Left colon (tissue), 2 donors: ENCODE measurements at regions of chr9 and their contacts with region 1.

Region 1: DNA sequence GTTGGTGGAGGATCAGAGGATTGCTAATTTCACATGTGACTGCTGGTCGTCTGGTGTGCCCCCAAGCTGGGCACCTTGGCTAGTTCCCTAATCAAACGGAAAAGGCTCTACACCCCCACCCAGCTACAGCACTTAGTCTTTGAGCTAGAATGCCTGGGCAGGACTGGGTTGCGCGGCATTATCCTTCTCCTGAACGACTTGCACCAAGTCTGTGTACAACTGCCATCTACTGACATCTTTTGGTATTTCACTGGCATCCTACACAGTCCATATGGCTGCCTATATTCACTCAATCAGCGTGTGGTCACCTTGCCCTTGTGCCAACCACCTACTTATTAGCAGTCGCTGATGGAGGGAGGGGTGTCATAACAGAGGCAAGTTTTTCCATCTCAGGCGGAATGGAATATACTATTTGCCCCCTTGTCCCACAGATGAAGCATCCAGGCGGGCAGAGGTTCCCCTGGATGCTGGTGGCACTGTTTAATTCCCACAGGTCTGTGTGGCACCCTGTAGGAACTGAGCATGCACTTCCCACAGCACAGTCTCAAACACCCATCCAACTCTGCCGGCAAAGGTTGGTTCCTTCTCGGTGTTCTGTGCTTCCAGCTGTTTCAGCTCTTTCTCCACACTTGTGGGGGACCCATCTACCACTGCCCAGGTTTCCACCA is 150.1 kb downstream of the OSTF1 start:
- DNase-seq: peak; percentile 52 to 53
- ATAC-seq: peak; percentile 97

Region 2: GRCh38 chr9:74742792-74743730 is 495.4 kb before region 1 on chr9:
- intact Hi-C with region 1: no loop called
- DNase-seq: no peak
- ATAC-seq: peak; percentile 33

Region 3: GRCh38 chr9:75200892-75201470 is 37.5 kb before region 1 on chr9:
- intact Hi-C with region 1: loop called in 1 of 2 experiments (anchors 5 kb)
- DNase-seq: no peak
- ATAC-seq: peak; percentile 40